B cell (primary cell): ENCODE measurements at regions of chr1 and their contacts with region 1.

Region 1: DNA sequence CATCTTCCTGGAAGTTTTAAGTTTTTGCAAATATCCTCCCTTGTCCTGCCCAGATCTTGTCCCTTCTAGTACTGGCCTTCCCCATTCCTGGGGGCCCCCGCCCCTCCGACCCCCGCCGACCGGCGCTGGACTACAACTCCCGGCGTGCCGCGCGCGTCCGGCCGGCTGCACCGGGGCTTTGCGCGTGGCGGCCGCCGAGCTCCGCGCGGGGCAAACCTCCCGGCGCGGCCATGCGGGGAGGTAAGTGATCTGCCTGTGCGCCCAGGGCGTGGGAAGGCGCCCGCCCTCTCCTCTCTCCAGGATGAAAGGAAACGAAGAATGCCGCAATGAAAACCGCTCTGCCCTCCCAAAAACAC is 3.2 kb upstream of the SAMD13 start:
- DNase-seq: no peak
- ATAC-seq: peak; percentile 87
- H3K4me3 ChIP-seq: peak overlapping the region; percentile 66 to 86 (median 84)
- H3K4me3 Mint-ChIP-seq: peak overlapping the region; percentile 94
- H3K27ac ChIP-seq: no peak overlapping the region
- H3K27ac Mint-ChIP-seq: peak overlapping the region; percentile 69
- H3K4me1 ChIP-seq: peaks cover 31 to 32% of the 10 kb centered on the region in 2 donors
- H3K4me1 Mint-ChIP-seq: peaks cover 36% of the 10 kb centered on the region
- H3K27me3 ChIP-seq: peaks cover 0 to 15% (median 9%) of the 10 kb centered on the region in 4 experiments
- H3K27me3 Mint-ChIP-seq: peaks cover 20% of the 10 kb centered on the region
- CTCF ChIP-seq: no peak

Region 2: GRCh38 chr1:84077476-84078107 is 220.7 kb before region 1 on chr1:
- CTCF ChIA-PET with region 1: no interaction called
- POLR2A ChIA-PET with region 1: no interaction called
- intact Hi-C with region 1: loop called (anchors 2 kb)
- DNase-seq: peak; percentile 85
- ATAC-seq: peak; percentile 93
- H3K4me3 ChIP-seq: peak overlapping the region; percentile 41 to 86 (median 68)
- H3K4me3 Mint-ChIP-seq: peak overlapping the region; percentile 84
- H3K27ac ChIP-seq: peak overlapping the region; percentile 46 to 70
- H3K27ac Mint-ChIP-seq: peak overlapping the region; percentile 67
- H3K4me1 ChIP-seq: peaks cover 7 to 12% of the 10 kb centered on the region in 2 donors
- H3K4me1 Mint-ChIP-seq: peaks cover 13% of the 10 kb centered on the region
- H3K27me3 ChIP-seq: no peaks in the 10 kb centered on the region
- H3K27me3 Mint-ChIP-seq: no peaks in the 10 kb centered on the region
- CTCF ChIP-seq: no peak

Region 3: GRCh38 chr1:84214115-84214956 is 84.0 kb before region 1 on chr1:
- CTCF ChIA-PET with region 1: no interaction called
- POLR2A ChIA-PET with region 1: no interaction called
- intact Hi-C with region 1: loop called (anchors 10 kb)
- DNase-seq: no peak
- ATAC-seq: no peak
- H3K4me3 ChIP-seq: no peak overlapping the region
- H3K4me3 Mint-ChIP-seq: no peak overlapping the region
- H3K27ac ChIP-seq: no peak overlapping the region
- H3K27ac Mint-ChIP-seq: no peak overlapping the region
- H3K4me1 ChIP-seq: no peaks in the 10 kb centered on the region
- H3K4me1 Mint-ChIP-seq: peaks cover 3% of the 10 kb centered on the region
- H3K27me3 ChIP-seq: no peaks in the 10 kb centered on the region
- H3K27me3 Mint-ChIP-seq: no peaks in the 10 kb centered on the region
- CTCF ChIP-seq: no peak

Region 4: GRCh38 chr1:84620720-84621313 is 322.5 kb after region 1 on chr1:
- CTCF ChIA-PET with region 1: interaction called, 4 read pairs
- POLR2A ChIA-PET with region 1: no interaction called
- intact Hi-C with region 1: loop called (anchors 2 kb)
- DNase-seq: peak; percentile 90
- ATAC-seq: peak; percentile 92
- H3K4me3 ChIP-seq: peak overlapping the region in 4 of 5 experiments; percentile 59 to 84 (median 72)
- H3K4me3 Mint-ChIP-seq: peak overlapping the region; percentile 96
- H3K27ac ChIP-seq: no peak overlapping the region
- H3K27ac Mint-ChIP-seq: peak overlapping the region; percentile 69
- H3K4me1 ChIP-seq: peaks cover 0 to 4% of the 10 kb centered on the region in 2 donors
- H3K4me1 Mint-ChIP-seq: peaks cover 6% of the 10 kb centered on the region
- H3K27me3 ChIP-seq: peaks cover 0 to 5% (median 0%) of the 10 kb centered on the region in 4 experiments
- H3K27me3 Mint-ChIP-seq: peaks cover 6% of the 10 kb centered on the region
- CTCF ChIP-seq: peak; percentile 100

Region 5: DNA sequence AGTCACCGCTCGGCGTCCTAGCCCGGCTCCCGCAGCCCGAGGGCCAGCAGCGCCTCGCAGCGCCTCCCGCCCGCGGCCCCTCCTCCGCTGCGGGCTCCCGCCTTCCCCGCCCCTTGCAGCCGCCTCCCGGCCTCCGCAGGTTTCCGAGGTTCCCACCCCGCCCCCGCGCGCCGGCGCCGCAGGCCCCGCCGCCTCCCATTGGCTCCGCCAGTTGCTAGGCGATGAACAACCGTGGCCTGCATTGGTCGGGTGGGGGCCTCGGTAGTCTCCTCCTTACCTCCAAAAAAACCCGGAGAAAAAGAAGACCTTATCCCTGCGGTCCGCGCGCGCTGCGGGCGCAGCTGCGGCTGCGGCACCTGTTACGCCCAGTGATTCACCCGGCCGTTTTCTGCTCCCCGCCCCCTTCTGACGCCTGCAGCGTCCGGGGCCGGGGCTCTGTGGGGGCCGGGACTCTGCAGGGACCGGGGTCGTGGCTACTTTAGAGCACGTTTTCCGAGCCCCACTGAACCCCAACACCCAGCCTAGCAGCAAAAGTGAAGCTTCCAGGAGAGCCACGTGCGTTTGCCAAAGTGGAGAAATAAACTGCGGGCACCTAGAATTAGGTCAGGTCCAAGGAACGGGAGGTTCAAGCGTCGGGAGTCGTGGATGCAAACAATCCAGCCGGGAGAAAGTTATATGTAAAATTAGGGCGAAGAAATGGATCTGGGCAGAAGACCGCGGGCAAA is 392.3 kb after region 1 on chr1 and contains the start of gene SSX2IP:
- CTCF ChIA-PET with region 1: no interaction called
- POLR2A ChIA-PET with region 1: no interaction called
- intact Hi-C with region 1: loop called (anchors 2 kb)
- DNase-seq: peak; percentile 97
- ATAC-seq: peak; percentile 86
- H3K4me3 ChIP-seq: peak within 1 kb of the TSS; percentile 71 to 93 (median 85)
- H3K4me3 Mint-ChIP-seq: peak within 1 kb of the TSS; percentile 80
- H3K27ac ChIP-seq: peak within 1 kb of the TSS; percentile 56 to 64
- H3K27ac Mint-ChIP-seq: peak within 1 kb of the TSS; percentile 62
- H3K4me1 ChIP-seq: peaks cover 12 to 24% of the 10 kb centered on the region in 2 donors
- H3K4me1 Mint-ChIP-seq: peaks cover 27% of the 10 kb centered on the region
- H3K27me3 ChIP-seq: no peaks in the 10 kb centered on the region
- H3K27me3 Mint-ChIP-seq: no peaks in the 10 kb centered on the region
- CTCF ChIP-seq: no peak
- total RNA-seq, gene SSX2IP: 7.1 and 10.3 TPM in 2 replicates